GM10248 (cell line): ENCODE measurements at regions of chr19 and their contacts with region 1.

Region 1: GRCh38 chr19:4867534-4868285 is at the start of gene PLIN3:
- DNase-seq: peak; percentile 100
- CTCF ChIP-seq: no peak

Region 2: DNA sequence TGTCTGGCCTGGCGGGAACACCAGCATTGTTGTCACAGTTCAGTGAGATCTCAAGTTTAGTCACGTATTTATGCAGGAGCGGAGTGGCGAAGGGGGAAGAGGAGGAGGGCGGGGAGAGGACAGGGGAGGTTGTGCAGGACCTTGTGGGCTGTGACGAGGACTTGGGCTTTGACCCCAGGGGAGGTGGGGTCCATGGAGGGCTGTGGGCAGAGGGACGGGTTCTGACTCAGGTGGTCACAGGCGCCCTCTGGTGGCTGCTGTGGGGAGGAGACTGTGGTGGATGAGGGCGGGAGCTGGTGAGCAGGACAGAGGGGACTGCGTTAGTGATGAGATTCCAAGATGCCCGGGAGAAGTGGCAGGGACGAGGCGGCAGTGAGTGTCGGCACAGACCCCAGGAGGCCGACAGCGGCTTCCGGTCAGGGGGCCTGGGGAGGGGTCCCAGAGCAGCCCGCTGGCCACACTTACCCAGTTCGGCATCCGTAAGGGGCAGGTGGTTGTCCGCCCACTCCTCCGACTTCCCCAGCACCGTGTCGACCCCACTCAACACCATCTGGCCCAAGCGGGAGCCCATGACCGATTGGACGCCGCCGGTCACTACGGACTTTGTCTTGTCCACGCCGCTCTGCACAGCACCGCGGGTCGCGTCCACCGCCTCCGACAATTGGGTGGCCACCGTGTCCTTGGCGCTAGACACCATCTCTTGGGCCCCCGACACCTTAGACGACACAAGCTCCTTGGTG is 16.0 kb before region 1 on chr19:
- CTCF ChIA-PET with region 1: interaction called, 71 read pairs
- POLR2A ChIA-PET with region 1: interaction called, 3 read pairs
- DNase-seq: peak; percentile 84
- CTCF ChIP-seq: peak; percentile 84